Activated T-helper 2 cell treated with anti-CD3 and anti-CD28 coated beads, Interferon-gamma antibody, Interleukin-2, Interleukin-4, amounts not matched to agents 10 μg/mL and 5 μg/mL and 100 μg/mL, durations not matched to agents 14 hours and 24 hours and 36 hours (primary cell): ENCODE measurements at regions of chr11 and their contacts with region 1.

Region 1: DNA sequence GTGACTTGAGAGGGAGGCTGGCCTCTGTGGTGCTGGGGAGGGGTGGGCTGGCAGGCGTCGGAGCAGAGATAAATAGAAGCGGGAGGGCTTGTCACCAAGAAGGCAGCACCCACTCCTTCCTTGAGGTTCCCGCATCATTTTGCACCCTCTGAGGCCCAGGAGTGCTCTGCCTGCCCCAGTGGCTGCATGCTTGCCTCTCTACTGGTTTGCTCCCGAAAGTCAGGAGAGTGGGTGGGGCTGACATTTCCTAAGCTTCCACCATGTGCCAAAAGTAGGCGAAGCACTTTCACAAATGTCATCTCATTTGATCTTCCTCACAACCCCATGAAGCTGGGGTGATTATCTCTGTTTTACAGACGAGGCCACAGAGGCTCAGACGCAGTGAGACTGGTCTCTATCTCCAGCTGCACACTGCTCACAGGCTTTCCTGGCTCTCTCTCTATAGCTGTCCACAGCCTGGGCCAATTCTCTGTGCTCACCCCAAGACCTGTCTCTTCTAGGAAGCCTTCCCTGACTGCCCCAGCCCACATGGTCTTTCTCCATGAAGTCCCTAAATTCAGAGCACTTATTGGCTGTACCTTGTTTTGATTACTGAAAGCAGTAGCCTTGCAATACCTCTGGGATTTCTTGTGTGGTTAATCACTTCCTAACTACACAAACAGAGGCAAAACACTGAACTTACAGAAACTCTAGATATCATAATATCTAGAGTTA is 2.6 kb upstream of the UCP3 start:
- DNase-seq: peak; percentile 52
- H3K4me3 Mint-ChIP-seq: peak overlapping the region; percentile 7
- H3K27ac Mint-ChIP-seq: peak overlapping the region; percentile 99
- H3K4me1 Mint-ChIP-seq: peaks cover 78% of the 10 kb centered on the region
- H3K27me3 Mint-ChIP-seq: no peaks in the 10 kb centered on the region

Region 2: GRCh38 chr11:73995247-73995646 is 16.3 kb before region 1 on chr11:
- intact Hi-C with region 1: loop called (anchors 1 kb)
- DNase-seq: no peak
- H3K4me3 Mint-ChIP-seq: peak overlapping the region; percentile 37
- H3K27ac Mint-ChIP-seq: peak overlapping the region; percentile 96
- H3K4me1 Mint-ChIP-seq: peaks cover 45% of the 10 kb centered on the region
- H3K27me3 Mint-ChIP-seq: no peaks in the 10 kb centered on the region

Region 3: DNA sequence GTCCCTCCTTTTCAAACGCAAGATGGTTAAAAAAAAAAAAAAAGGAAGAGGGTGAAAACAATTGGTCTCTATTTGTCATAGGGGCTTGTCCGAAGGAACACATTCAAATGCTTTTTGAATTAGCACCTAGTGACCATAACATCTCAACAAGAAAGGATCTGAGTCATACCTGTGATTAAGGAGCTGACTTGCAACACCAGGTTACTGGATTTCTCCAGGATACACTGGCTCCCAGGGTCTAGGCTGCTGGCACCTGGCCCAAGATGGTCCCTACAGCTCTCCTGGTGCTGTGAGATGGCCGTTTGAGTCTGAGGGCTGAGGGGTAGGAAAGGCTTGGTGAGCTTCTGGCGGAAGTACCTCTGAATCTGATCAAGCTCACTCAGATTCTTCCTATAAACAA is 25.8 kb after region 1 on chr11:
- intact Hi-C with region 1: no loop called
- DNase-seq: no peak
- H3K4me3 Mint-ChIP-seq: no peak overlapping the region
- H3K27ac Mint-ChIP-seq: no peak overlapping the region
- H3K4me1 Mint-ChIP-seq: peaks cover 2% of the 10 kb centered on the region
- H3K27me3 Mint-ChIP-seq: no peaks in the 10 kb centered on the region